Activated naive CD4-positive, alpha-beta T cell treated with anti-CD3 and anti-CD28 coated beads for 36 hours (primary cell): ENCODE measurements at regions of chr1 and their contacts with region 1.

Region 1: GRCh38 chr1:58699011-58699762 is 675 bp downstream of the MYSM1 start:
- DNase-seq: peak; percentile 17
- H3K4me3 Mint-ChIP-seq: peak overlapping the region; percentile 96
- H3K27ac Mint-ChIP-seq: peak overlapping the region; percentile 91
- H3K4me1 Mint-ChIP-seq: peaks cover 19% of the 10 kb centered on the region
- H3K27me3 Mint-ChIP-seq: no peaks in the 10 kb centered on the region

Region 2: GRCh38 chr1:58710190-58711085 is 11.3 kb after region 1 on chr1:
- CTCF ChIA-PET with region 1: interaction called, 10 read pairs
- intact Hi-C with region 1: no loop called
- DNase-seq: no peak
- H3K4me3 Mint-ChIP-seq: no peak overlapping the region
- H3K27ac Mint-ChIP-seq: no peak overlapping the region
- H3K4me1 Mint-ChIP-seq: no peaks in the 10 kb centered on the region
- H3K27me3 Mint-ChIP-seq: no peaks in the 10 kb centered on the region